Activated B cell treated with CpG ODN at 0.5 μM for 24 hours (primary cell): ENCODE measurements at regions of chr7 and their contacts with region 1.

Region 1: GRCh38 chr7:23181684-23182553 is at the start of gene NUP42:
- DNase-seq: peak; percentile 90
- ATAC-seq: peak; percentile 90
- H3K4me3 Mint-ChIP-seq: peak within 1 kb of the TSS; percentile 94
- H3K27ac Mint-ChIP-seq: peak within 1 kb of the TSS; percentile 100
- H3K4me1 Mint-ChIP-seq: peaks cover 28% of the 10 kb centered on the region
- H3K27me3 Mint-ChIP-seq: no peaks in the 10 kb centered on the region
- CTCF ChIP-seq: no peak
- total RNA-seq, gene NUP42: 39.2 and 50.6 TPM in 2 replicates

Region 2: GRCh38 chr7:21966271-21966670 is 1215.6 kb before region 1 on chr7:
- CTCF ChIA-PET with region 1: no interaction called
- POLR2A ChIA-PET with region 1: no interaction called
- intact Hi-C with region 1: loop called (anchors 5 kb)
- DNase-seq: peak; percentile 31
- ATAC-seq: peak; percentile 97
- H3K4me3 Mint-ChIP-seq: peak overlapping the region; percentile 66
- H3K27ac Mint-ChIP-seq: peak overlapping the region; percentile 87
- H3K4me1 Mint-ChIP-seq: peaks cover 63% of the 10 kb centered on the region
- H3K27me3 Mint-ChIP-seq: no peaks in the 10 kb centered on the region
- CTCF ChIP-seq: no peak

Region 3: GRCh38 chr7:22822486-22823141 is 359.3 kb before region 1 on chr7 and contains the start of gene TOMM7:
- CTCF ChIA-PET with region 1: no interaction called
- POLR2A ChIA-PET with region 1: no interaction called
- intact Hi-C with region 1: loop called (anchors 5 kb)
- DNase-seq: peak; percentile 66
- ATAC-seq: peak; percentile 99
- H3K4me3 Mint-ChIP-seq: peak within 1 kb of the TSS; percentile 99
- H3K27ac Mint-ChIP-seq: peak within 1 kb of the TSS; percentile 91
- H3K4me1 Mint-ChIP-seq: peaks cover 39% of the 10 kb centered on the region
- H3K27me3 Mint-ChIP-seq: peaks cover 11% of the 10 kb centered on the region
- CTCF ChIP-seq: no peak
- total RNA-seq, gene TOMM7: 324 and 406 TPM in 2 replicates